SK-N-SH (cell line): ENCODE measurements at regions of chr3 and their contacts with region 1.

Region 1: DNA sequence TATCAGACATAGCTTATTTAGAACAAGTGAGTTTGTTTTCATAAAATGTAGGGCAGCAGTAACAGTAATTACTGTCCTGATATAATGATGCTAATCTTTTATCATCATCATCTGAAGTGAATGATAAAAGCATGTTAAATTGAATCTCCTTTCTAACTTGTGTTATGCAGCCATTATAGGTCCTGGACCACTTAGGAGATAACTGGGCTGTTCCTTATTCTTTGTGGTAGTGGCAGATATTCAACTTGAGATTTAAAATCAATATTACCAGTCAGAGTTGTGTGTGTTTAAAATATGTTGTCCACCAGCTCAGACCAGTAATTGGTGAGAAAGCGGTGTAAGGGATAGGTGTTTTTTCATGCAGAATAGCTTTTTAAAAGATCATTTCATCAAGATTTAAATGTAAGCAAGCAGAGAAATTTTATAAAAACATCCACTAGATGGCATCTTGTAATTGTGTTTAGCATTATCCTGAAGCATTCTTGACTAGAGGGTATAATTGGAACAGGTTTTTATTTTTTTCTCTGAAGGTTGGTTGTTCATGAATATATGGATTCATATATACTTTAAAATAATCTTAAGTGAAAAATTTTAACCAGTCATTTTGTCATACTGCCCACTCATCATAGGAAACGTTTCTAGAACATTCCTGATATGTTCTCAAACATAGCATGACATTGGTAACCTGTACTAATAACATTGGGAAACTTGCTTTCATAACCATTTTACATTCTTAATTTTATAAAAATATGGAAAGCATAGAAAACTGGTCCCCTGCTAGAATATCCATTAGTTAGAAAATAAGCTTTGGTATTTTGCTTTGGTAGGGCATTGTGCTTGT is 153.9 kb downstream of the BBX start:
- DNase-seq: peak; percentile 29
- H3K4me3 ChIP-seq: no peak overlapping the region; a peak in 1 of 4 replicates
- H3K27ac ChIP-seq: no peak overlapping the region
- H3K4me1 ChIP-seq: no peaks in the 10 kb centered on the region; a peak in 2 of 4 replicates
- H3K27me3 ChIP-seq: no peaks in the 10 kb centered on the region
- CTCF ChIP-seq: peak; percentile 74
- EP300 ChIP-seq: no peak
- RAD21 ChIP-seq: peak; percentile 64

Region 2: DNA sequence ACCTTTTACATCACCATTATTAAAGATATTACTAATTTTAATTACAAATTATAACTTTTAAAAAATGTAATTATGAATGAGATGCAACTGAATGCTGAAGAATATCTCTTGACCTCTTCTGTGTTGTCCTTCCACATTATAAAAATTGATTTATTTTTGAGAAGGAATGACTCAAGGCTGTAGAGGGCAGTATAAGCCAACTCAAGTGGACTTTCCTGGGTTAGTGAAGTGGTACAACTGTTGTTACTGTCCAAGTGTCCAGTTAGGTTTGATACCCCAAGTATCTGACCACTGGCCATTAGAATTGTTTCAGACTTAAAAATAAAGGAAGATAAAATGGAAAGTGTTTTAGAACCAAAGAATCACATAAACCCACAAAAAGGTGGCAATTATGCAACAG is 102.0 kb before region 1 on chr3:
- CTCF ChIA-PET with region 1: interaction called, 13 read pairs
- POLR2A ChIA-PET with region 1: no interaction called
- DNase-seq: peak; percentile 35
- H3K4me3 ChIP-seq: no peak overlapping the region
- H3K27ac ChIP-seq: no peak overlapping the region
- H3K4me1 ChIP-seq: peaks cover 0 to 4% of the 10 kb centered on the region in 2 experiments; a peak in 1 of 4 replicates
- H3K27me3 ChIP-seq: no peaks in the 10 kb centered on the region
- CTCF ChIP-seq: peak; percentile 68
- EP300 ChIP-seq: no peak
- RAD21 ChIP-seq: peak; percentile 85

Region 3: DNA sequence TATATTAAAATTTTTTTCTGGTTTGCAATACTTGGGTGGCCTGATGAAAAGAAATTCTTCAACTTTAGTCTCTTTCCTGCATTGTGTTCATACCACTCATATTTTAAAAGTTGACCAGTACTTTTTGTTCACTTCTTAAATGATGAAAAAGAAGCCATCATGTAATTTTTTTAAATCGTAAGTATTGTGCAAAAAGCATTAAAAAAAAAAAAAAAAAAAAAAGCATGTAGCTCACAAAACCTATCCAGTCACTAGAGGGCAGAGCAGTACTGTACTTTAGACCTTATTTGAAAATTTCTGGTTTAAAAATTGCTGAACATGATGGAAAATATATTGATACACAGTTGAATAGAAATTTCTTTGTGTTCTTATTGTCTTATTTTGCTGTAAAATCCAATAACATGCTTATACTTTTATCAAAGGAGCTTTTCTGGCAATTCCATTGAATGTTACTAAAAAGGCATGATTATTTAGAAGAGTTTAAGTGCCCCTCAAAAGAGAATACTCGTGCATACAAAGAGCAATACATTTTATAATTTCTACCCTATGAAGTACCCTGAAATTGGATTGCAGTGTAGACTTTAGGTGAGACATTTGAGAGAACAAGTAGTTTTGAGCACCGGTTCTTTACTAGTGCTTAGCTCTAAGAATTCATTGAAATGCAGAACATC is 16.2 kb before region 1 on chr3:
- CTCF ChIA-PET with region 1: interaction called, 72 read pairs
- POLR2A ChIA-PET with region 1: no interaction called
- DNase-seq: peak; percentile 12
- H3K4me3 ChIP-seq: no peak overlapping the region
- H3K27ac ChIP-seq: 0 out of 4 replicates have a peak overlapping the region, but pooled peaks of 1 of the 2 experiments have one; percentile 0
- H3K4me1 ChIP-seq: peaks cover 7 to 21% of the 10 kb centered on the region in 2 experiments; a peak in 3 of 4 replicates
- H3K27me3 ChIP-seq: no peaks in the 10 kb centered on the region
- CTCF ChIP-seq: peak; percentile 87
- EP300 ChIP-seq: no peak
- RAD21 ChIP-seq: peak; percentile 72

Region 4: GRCh38 chr3:107690522-107691138 is 13.9 kb after region 1 on chr3:
- CTCF ChIA-PET with region 1: interaction called, 64 read pairs
- POLR2A ChIA-PET with region 1: no interaction called
- DNase-seq: peak; percentile 35
- H3K4me3 ChIP-seq: no peak overlapping the region; a peak in 1 of 4 replicates
- H3K27ac ChIP-seq: no peak overlapping the region
- H3K4me1 ChIP-seq: no peaks in the 10 kb centered on the region; a peak in 1 of 4 replicates
- H3K27me3 ChIP-seq: no peaks in the 10 kb centered on the region
- CTCF ChIP-seq: peak; percentile 77
- EP300 ChIP-seq: no peak
- RAD21 ChIP-seq: peak; percentile 61

Region 5: DNA sequence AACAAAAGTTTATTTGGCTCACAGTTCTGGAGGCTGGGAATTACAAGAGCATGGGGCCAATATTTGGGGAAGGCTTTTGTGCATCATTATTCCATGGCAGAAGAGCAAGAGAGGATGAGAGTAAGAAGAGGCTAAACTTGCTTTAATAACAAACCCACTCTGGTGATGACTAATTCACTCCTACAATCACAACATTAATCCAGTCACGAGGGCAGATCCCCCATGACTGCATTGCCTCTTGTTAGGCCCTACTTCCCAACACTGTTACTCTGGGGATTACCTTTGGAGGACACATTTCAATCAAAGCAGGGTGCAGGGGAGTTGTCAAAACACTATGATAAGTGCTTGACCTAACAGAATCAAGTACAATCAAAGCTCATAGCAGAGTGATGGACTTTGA is 27.8 kb after region 1 on chr3:
- CTCF ChIA-PET with region 1: interaction called, 11 read pairs
- POLR2A ChIA-PET with region 1: no interaction called
- DNase-seq: no peak
- H3K4me3 ChIP-seq: no peak overlapping the region
- H3K27ac ChIP-seq: no peak overlapping the region
- H3K4me1 ChIP-seq: no peaks in the 10 kb centered on the region
- H3K27me3 ChIP-seq: no peaks in the 10 kb centered on the region
- CTCF ChIP-seq: no peak
- EP300 ChIP-seq: no peak
- RAD21 ChIP-seq: no peak

Region 6: GRCh38 chr3:107727102-107727501 is 50.4 kb after region 1 on chr3:
- CTCF ChIA-PET with region 1: interaction called, 10 read pairs
- POLR2A ChIA-PET with region 1: no interaction called
- DNase-seq: no peak
- H3K4me3 ChIP-seq: no peak overlapping the region
- H3K27ac ChIP-seq: no peak overlapping the region
- H3K4me1 ChIP-seq: no peaks in the 10 kb centered on the region
- H3K27me3 ChIP-seq: no peaks in the 10 kb centered on the region
- CTCF ChIP-seq: no peak
- EP300 ChIP-seq: no peak
- RAD21 ChIP-seq: no peak

Region 7: GRCh38 chr3:107753480-107753879 is 76.8 kb after region 1 on chr3:
- CTCF ChIA-PET with region 1: interaction called, 42 read pairs
- POLR2A ChIA-PET with region 1: no interaction called
- DNase-seq: peak; percentile 24
- H3K4me3 ChIP-seq: no peak overlapping the region
- H3K27ac ChIP-seq: peak overlapping the region in 1 of 2 experiments; percentile 76; a peak in 2 of 4 replicates
- H3K4me1 ChIP-seq: peaks cover 0 to 26% of the 10 kb centered on the region in 2 experiments; a peak in 2 of 4 replicates
- H3K27me3 ChIP-seq: no peaks in the 10 kb centered on the region
- CTCF ChIP-seq: peak; percentile 65
- EP300 ChIP-seq: no peak
- RAD21 ChIP-seq: peak; percentile 66